GM12878 (cell line): ENCODE measurements at regions of chr10 and their contacts with region 1.

Region 1: DNA sequence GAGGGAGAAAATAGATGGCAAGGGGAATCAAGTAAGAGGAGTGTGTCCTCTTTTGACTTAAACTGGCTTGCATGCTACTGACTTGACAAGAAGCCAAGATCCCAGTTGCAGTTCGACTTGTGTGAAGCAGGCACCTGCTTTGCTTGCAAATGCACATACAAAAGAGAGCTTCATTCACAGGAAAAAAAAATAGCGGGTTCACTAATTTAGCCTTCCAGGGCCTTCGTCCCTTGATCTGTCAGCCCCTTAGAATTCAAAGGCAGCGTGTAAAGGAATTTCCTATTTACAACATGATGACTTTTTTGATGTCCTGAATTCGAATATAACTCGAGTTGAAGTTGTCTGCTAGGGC is 192.1 kb downstream of the CELF2 start:
- DNase-seq: no peak
- ATAC-seq: peak; percentile 35
- H3K4me3 ChIP-seq: peak overlapping the region; percentile 7
- H3K27ac ChIP-seq: peak overlapping the region; percentile 92
- H3K4me1 ChIP-seq: peaks cover 86% of the 10 kb centered on the region
- H3K27me3 ChIP-seq: no peaks in the 10 kb centered on the region
- CTCF ChIP-seq: no peak
- EP300 ChIP-seq: no peak; a peak in 1 of 4 replicates
- POLR2A ChIP-seq: no peak
- RAD21 ChIP-seq: no peak

Region 2: DNA sequence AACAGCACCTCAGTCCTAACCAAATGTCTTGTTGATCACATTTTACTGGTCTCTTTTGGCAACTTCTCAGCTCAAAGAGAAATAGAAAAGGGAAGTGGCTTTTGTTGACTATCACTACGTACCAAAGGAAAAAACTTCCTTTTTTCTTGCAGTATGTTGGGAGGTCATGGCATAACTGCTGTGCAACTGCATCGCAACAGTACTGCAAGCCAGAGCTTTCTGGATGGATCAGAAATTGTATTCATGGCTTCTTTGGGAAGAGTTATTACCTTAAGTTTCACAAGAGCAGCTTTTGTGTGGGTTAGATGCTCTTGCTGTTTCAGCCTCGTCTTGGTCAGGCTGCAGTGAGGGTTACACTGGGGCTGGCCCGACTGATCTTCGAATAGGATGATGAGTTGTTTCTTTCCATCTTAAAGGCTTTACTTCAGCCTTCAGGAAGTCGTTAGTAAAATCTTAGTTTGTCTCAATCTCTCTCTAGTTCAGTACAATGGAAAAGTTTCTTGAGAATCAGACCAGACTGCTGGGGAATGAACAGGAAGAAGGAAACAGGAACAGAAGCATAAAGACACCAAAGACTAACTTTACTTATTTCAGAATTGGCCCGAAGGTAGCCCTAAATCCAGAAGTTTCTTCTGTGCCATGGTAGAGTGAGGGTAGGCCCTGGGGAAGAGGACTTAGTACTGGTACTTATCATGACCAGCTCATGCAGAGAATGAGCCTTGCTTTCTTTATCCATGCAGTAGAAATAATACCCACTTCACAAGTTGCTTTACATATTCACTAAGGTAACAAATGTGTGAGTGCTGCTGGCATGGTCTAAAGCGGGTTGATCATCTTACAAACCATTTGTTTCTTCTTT is 38.6 kb before region 1 on chr10:
- CTCF ChIA-PET with region 1: interaction called, 6 read pairs
- POLR2A ChIA-PET with region 1: interaction called, 4 read pairs
- RAD21 ChIA-PET with region 1: interaction called, 34 read pairs
- SMC1A ChIA-PET with region 1: interaction called, 28 read pairs
- in situ Hi-C with region 1: no loop called
- intact Hi-C with region 1: no loop called
- DNase-seq: no peak
- ATAC-seq: peak; percentile 23
- H3K4me3 ChIP-seq: peak overlapping the region; percentile 96
- H3K27ac ChIP-seq: peak overlapping the region; percentile 95
- H3K4me1 ChIP-seq: peaks cover 26% of the 10 kb centered on the region
- H3K27me3 ChIP-seq: no peaks in the 10 kb centered on the region
- CTCF ChIP-seq: no peak
- EP300 ChIP-seq: 0 out of 4 replicates have a peak, but pooled peaks of 1 of the 2 experiments have one; percentile 14
- POLR2A ChIP-seq: peak; percentile 33; the same call in 1 of the 2 replicates
- RAD21 ChIP-seq: no peak

Region 3: GRCh38 chr10:11197266-11197712 is 12.5 kb before region 1 on chr10:
- CTCF ChIA-PET with region 1: interaction called, 8 read pairs
- POLR2A ChIA-PET with region 1: interaction called, 8 read pairs
- RAD21 ChIA-PET with region 1: interaction called, 3 read pairs
- SMC1A ChIA-PET with region 1: interaction called, 25 read pairs
- in situ Hi-C with region 1: no loop called
- intact Hi-C with region 1: loop called (anchors 1 kb)
- DNase-seq: peak; percentile 79
- ATAC-seq: peak; percentile 85
- H3K4me3 ChIP-seq: no peak overlapping the region
- H3K27ac ChIP-seq: peak overlapping the region; percentile 63
- H3K4me1 ChIP-seq: peaks cover 84% of the 10 kb centered on the region
- H3K27me3 ChIP-seq: no peaks in the 10 kb centered on the region
- CTCF ChIP-seq: no peak
- EP300 ChIP-seq: peak; percentile 64 to 87
- POLR2A ChIP-seq: peak; percentile 61; the same call in 1 of the 2 replicates
- RAD21 ChIP-seq: no peak

Region 4: DNA sequence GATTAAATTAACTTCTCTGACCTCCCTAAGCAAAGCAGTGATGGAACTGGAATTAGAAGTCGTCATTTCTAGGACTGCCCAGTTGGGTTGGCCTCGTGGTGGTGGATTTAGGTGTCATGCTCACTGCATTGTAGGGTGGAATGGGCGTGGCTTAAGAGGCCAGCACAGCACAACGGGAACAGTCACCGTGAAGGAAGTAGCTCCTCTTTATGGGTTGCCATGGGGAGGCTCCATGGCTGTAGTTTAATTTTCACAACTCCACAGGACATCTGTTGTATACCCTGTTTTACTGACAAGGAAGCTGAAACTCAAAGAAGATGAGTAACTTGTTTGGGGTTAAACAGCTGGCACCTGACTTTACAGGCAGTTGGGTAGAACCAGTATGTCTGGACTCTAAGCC is 16.1 kb after region 1 on chr10:
- CTCF ChIA-PET with region 1: interaction called, 9 read pairs
- POLR2A ChIA-PET with region 1: interaction called, 18 read pairs
- RAD21 ChIA-PET with region 1: interaction called, 21 read pairs
- SMC1A ChIA-PET with region 1: interaction called, 108 read pairs
- in situ Hi-C with region 1: no loop called
- intact Hi-C with region 1: loop called (anchors 2 kb)
- DNase-seq: no peak
- ATAC-seq: peak; percentile 79
- H3K4me3 ChIP-seq: 0 out of 2 replicates have a peak overlapping the region, but pooled peaks have one; percentile 8
- H3K27ac ChIP-seq: peak overlapping the region; percentile 77
- H3K4me1 ChIP-seq: peaks cover 62% of the 10 kb centered on the region
- H3K27me3 ChIP-seq: no peaks in the 10 kb centered on the region
- CTCF ChIP-seq: no peak
- EP300 ChIP-seq: 0 out of 4 replicates have a peak, but pooled peaks of 1 of the 2 experiments have one; percentile 23
- POLR2A ChIP-seq: no peak
- RAD21 ChIP-seq: no peak

Region 5: GRCh38 chr10:11236234-11236633 is 26.4 kb after region 1 on chr10:
- CTCF ChIA-PET with region 1: interaction called, 6 read pairs
- POLR2A ChIA-PET with region 1: interaction called, 16 read pairs
- RAD21 ChIA-PET with region 1: interaction called, 45 read pairs
- SMC1A ChIA-PET with region 1: interaction called, 108 read pairs
- in situ Hi-C with region 1: no loop called
- intact Hi-C with region 1: no loop called
- DNase-seq: no peak
- ATAC-seq: peak; percentile 69
- H3K4me3 ChIP-seq: peak overlapping the region; percentile 36; the same call in 1 of the 2 replicates
- H3K27ac ChIP-seq: peak overlapping the region; percentile 74
- H3K4me1 ChIP-seq: peaks cover 71% of the 10 kb centered on the region
- H3K27me3 ChIP-seq: no peaks in the 10 kb centered on the region
- CTCF ChIP-seq: 0 out of 6 replicates have a peak, but pooled peaks of 1 of the 3 experiments have one; percentile 2
- EP300 ChIP-seq: peak in 1 of 2 experiments; percentile 63; a peak in 1 of 4 replicates
- POLR2A ChIP-seq: no peak
- RAD21 ChIP-seq: no peak